H1 (cell line): ENCODE measurements at regions of chr6 and their contacts with region 1.

Region 1: DNA sequence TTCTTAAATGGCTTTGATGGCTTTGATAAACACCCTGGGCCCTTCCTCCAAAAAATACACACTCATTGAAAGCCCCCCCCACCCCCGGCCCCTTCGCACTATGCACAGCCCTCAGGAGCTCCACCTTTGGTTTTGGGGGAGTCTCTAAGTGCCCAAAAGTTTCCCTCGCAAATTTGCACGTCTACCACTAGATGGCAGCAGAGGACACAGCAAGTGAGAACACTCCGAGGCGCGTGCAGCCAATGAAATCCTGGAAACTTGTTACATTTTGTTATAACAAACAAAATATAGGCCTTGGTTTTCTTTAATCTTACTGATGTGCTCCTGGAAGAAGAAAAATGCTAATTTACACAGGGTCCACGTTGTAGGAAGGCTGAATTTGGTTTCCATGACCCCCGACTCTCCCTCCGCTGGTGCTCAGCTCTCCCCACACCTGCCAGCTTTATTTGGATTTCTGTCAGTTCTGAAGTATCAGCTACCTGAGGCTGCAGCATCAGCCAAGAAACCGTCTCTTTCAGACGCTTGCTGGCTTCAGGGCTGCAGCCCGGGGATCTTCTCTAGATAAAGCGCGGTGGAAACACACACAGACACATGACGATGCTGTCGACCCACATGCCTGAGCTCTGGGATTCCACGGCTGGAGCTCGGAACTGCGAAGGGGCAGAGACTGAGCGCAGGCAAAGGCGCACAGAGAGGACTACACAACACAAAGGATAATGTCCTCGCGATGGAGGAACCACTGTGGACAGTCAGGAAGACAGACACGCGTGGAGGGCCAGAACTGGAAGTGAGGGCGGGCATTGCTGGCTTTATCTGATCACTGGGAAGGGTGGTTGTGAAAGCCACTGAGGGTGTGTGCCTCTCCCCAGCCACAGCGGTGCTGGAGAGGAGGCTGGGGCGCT is 148.4 kb upstream of the RPS6KA2 start:
- DNase-seq: peak in 1 of 2 experiments; percentile 67
- H3K4me3 ChIP-seq: no peak overlapping the region
- H3K27ac ChIP-seq: no peak overlapping the region
- H3K4me1 ChIP-seq: peaks cover 2 to 12% (median 8%) of the 10 kb centered on the region in 4 experiments; a peak in 5 of 7 replicates
- H3K27me3 ChIP-seq: no peaks in the 10 kb centered on the region
- CTCF ChIP-seq: peak; percentile 74 to 91 (median 79)
- EP300 ChIP-seq: no peak
- POLR2A ChIP-seq: no peak
- RAD21 ChIP-seq: peak; percentile 90 to 91

Region 2: GRCh38 chr6:166724576-166724975 is 50.9 kb before region 1 on chr6:
- CTCF ChIA-PET with region 1: interaction called, 10 read pairs
- POLR2A ChIA-PET with region 1: no interaction called
- DNase-seq: no peak
- H3K4me3 ChIP-seq: no peak overlapping the region
- H3K27ac ChIP-seq: no peak overlapping the region
- H3K4me1 ChIP-seq: no peaks in the 10 kb centered on the region; a peak in 2 of 7 replicates
- H3K27me3 ChIP-seq: no peaks in the 10 kb centered on the region
- CTCF ChIP-seq: no peak
- EP300 ChIP-seq: no peak
- POLR2A ChIP-seq: no peak
- RAD21 ChIP-seq: no peak

Region 3: DNA sequence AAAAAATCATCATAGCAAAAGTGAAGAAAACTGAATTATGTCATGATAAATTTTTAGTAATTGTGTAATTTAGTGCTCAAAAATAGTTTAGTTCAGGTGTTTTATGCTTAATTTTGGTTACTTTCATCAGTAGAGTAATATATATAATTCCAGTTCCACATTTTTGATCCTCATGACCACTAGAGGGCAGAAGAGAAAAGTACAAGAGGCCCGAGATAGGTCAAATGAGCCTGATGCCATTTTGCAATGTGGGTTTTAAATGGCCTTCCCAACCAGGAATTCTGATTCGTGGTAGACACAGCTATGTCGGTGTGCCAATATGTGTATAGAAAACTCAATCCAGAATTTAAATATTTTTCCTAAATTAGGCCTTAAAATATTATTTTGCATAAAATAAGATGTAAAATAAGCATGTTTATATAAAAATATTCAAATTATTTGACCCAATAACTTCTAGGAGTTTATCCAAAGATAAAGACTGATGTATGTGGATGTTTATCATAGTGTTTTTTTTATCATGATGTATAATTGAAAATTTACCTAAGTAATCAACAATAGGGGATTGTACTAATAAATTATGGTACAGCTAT is 11.4 kb after region 1 on chr6:
- CTCF ChIA-PET with region 1: interaction called, 16 read pairs
- POLR2A ChIA-PET with region 1: no interaction called
- DNase-seq: no peak
- H3K4me3 ChIP-seq: no peak overlapping the region
- H3K27ac ChIP-seq: no peak overlapping the region
- H3K4me1 ChIP-seq: no peaks in the 10 kb centered on the region
- H3K27me3 ChIP-seq: no peaks in the 10 kb centered on the region
- CTCF ChIP-seq: peak in 2 of 3 experiments; percentile 53 to 58; a peak in 2 of 4 replicates
- EP300 ChIP-seq: no peak
- POLR2A ChIP-seq: no peak
- RAD21 ChIP-seq: peak; percentile 82 to 83

Region 4: DNA sequence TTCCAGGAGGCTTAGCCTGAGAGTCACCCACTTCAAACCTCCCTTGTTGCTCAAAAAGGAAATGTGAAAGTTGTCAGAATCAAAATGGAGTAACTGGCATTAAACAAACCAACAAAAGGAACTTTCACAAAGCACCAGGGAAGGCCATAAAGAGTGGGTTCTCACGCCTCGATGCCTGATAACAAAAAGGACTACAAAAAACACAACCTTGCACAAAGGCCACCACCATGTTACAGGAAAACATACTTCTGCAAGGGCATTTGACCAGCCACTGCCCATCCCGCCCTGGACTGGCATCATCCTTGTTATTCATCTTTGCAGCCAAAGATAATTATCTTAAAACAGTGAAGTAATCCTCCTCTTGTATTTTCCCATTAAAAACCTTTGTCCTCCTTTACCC is 146.1 kb after region 1 on chr6:
- CTCF ChIA-PET with region 1: interaction called, 11 read pairs
- POLR2A ChIA-PET with region 1: no interaction called
- DNase-seq: no peak
- H3K4me3 ChIP-seq: no peak overlapping the region
- H3K27ac ChIP-seq: no peak overlapping the region
- H3K4me1 ChIP-seq: no peaks in the 10 kb centered on the region
- H3K27me3 ChIP-seq: peaks cover 0 to under 1% (median 0%) of the 10 kb centered on the region in 4 experiments; a peak in 1 of 7 replicates
- CTCF ChIP-seq: no peak
- EP300 ChIP-seq: no peak
- POLR2A ChIP-seq: no peak
- RAD21 ChIP-seq: no peak

Region 5: DNA sequence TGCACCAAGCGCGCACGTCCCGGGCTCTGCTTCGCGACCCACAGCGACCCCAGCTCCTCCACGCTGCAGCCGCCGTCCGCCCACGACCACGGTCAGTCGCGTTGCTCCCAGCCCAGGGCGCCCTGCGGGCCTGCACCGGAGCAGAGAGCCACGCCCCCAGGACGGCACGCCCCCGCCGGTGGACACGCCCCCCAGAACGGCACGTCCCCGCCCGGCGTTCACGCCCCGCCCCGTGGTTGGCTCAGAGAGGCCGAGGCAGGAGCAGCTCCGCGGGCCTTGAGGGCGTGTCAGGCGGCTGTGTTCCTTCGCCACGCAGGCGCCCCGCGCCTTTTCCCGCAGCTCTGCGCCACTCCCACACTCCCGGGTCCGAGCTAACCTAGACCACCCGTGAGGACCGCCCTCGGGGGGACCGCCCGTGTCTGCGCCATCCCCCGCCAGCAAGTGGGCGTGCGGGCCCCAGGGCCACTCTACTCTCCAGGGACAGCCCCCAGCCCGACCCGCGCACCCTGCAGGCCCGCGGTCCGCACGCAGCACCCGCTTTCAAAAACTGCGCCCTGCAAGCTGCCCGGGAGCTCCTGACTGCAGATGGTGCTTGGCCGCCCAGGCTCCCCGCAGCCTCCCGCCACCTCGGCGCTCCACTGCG is 181.1 kb after region 1 on chr6 and contains the start of gene RNASET2:
- CTCF ChIA-PET with region 1: interaction called, 40 read pairs
- POLR2A ChIA-PET with region 1: no interaction called
- DNase-seq: peak in 1 of 2 experiments; percentile 100
- H3K4me3 ChIP-seq: peak within 1 kb of the TSS; percentile 58 to 83 (median 72)
- H3K27ac ChIP-seq: no peak within 1 kb of the TSS
- H3K4me1 ChIP-seq: peaks cover 2 to 12% (median 5%) of the 10 kb centered on the region in 4 experiments; a peak in 6 of 7 replicates
- H3K27me3 ChIP-seq: peaks cover 0 to 6% (median 0%) of the 10 kb centered on the region in 4 experiments; a peak in 3 of 7 replicates
- CTCF ChIP-seq: no peak
- EP300 ChIP-seq: no peak
- POLR2A ChIP-seq: no peak; a peak in 1 of 3 replicates
- RAD21 ChIP-seq: no peak
- total RNA-seq, gene RNASET2: 20.8 and 22.9 TPM in 2 replicates